ENCODE measurements at regions of chr11 and their contacts with region 1.

Region 1: GRCh38 chr11:12893787-12894672 is 115.1 kb upstream of the RASSF10 start:
- DNase-seq: no peak
- ATAC-seq: no peak

Region 2: DNA sequence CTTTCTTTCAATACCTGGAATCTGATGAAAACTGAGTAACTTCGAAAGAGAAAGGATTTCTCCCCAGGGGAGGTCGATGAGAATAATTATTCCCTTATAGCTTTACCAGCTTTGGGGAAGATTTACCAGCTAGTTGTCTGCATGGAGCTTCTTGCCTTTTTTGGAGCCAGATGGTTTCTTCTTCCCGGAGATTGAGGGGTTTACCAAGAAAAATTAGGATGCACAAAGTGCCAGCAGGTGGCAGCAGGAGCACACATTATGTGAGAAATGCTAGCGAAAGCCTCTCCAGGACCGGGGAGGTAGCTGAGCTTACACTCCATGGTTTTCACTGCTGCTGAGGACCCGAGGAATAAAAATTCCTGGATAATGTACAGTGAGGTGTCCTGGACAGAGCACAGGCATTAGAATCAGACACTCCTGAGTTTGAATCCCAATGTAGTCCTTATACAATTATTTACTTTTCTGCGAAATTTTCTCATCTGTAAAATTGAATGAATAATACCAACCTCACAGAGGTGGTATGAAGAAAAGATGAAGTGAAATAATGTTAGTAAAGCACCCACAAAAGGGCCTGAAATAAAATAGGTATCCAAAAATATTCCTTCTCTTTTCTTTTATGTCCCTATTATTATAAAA is 562.7 kb before region 1 on chr11:
- intact Hi-C with region 1: loop called (anchors 1 kb)
- DNase-seq: peak; percentile 82
- ATAC-seq: peak; percentile 84

Region 3: DNA sequence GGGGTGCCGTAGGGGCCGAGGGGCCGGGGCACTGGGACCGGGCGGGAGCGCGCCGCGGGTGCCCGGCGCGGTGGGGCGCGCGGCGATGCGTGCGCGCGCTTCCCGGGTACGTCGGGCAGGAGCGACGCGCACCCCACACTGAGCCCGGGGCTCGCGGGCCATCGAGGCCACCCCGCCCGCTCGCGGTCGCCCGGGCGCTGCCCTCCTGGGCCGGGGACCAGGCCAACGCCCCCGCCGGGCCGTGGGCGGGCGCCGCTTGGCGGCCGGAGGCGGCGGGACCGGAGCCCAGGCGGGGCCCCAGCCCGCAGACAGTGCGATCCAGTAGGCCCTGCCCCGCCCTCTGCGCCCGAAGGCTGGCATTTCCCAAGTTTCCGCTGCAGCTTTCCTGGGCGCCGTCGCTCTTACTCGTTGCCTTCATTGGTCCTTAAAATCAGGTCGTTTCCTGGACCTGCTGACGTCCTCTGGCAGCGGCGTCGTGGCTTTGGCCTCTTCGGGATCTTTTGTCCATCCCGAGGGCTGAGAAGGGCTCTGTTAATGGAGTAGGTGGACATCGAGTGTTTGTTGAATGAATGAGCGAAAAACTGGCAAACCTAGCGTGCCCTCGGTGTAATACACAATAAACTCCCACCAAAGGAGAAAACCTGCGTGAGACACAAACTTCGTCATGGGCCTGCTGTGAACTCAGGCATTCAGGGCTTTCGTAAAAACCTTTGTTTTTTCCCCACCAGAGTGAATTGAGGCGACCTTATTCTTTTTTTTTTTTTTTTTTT is 516.0 kb before region 1 on chr11:
- intact Hi-C with region 1: loop called (anchors 2 kb)
- DNase-seq: peak; percentile 85
- ATAC-seq: peak; percentile 58

Region 4: DNA sequence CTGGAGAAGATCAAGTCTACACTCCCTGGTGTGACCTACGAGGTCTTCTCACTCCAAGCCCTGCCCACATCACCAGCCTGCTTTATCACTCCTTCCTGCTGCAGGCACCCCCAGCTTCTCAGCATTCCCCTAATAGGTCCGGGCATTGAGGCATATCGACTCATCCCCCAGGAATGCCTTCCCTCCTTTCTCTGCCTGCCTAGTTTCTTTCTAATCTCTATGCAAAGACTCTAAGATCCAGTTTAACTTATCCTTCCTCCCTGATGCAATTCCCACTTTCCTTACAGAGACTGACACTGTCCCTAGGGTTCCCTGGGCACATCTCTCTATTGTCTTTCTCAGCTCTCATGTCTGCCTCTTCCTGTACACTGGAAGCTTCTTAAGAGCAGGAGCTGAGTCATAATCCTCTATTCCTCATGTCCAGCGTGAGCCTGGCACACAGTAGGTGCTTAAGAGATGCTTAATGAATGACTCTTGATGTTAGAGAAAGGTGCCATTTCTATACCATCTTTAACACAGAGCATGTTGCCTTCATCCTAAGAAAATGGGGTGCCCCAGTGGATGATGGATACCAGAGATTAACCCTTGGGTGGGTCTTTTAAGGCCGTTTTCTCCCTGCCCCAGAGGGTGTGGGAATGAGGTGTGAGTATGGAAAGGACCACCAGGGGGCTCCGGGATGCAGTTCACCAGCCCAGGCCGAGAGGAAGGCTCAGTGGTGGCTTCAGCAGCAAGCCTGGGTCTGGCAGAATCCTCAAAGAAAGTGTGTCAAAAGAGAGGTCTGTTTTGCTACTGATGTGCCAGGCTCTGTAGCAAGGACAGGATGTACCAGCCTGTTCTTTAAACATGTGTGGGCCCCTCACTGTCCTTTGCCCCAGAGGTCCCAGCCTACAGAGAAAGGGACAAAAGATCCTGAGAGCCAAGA is 482.0 kb before region 1 on chr11:
- intact Hi-C with region 1: loop called (anchors 5 kb)
- DNase-seq: no peak
- ATAC-seq: peak; percentile 86

Region 5: DNA sequence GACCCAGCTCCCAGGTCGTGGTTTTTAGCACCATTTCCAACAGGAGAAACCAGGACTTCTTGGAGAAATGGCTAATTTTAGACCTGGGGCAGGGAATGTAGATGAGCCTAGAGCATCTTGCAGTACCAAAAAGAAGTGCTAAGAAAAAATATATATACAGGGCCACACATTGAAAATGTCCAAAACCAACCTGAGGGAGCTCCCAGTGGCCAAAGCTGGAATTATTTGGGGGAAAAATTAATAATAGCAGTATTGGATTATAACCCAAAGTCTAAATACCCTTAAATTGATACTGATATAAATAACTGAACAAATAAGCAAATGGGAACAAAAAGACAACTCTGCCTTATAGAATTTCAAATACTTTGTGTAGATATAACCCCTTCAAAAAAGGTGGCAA is 408.7 kb before region 1 on chr11:
- intact Hi-C with region 1: loop called (anchors 10 kb)
- DNase-seq: no peak
- ATAC-seq: no peak

Region 6: DNA sequence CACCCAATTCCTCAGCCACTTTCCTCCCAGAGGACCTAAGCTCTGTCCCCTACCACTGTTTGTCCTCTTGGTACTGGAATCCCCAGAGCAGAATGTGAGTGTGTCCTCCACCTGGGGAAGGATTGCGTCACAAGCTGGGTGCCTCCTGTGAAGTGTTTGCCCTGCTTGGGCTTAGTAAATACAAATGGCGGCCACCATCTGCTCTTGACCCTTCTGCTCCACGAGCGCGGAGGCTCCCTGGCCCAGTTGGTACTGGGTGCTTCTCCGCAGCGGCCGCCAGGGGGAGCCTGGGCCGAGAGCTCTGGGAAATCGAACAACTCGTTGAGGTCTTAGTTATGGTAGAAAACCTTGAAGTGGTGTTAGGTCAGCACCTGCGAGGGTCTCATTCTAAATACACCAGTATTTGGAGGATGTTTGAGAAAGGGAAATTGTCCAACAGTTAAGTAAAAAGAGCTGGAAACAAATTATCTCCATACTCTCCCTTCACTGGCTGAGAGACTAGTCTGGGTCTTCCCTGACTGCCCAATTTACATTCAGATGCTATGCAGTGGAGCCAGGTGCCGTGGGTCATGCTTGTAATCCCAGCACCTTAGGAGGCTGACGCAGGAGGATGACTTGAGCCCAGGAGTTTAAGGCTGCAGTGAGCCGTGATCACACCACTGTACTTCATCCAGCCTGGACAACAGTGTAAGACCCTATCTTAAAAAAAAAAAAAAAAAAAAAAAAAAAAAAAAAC is 294.5 kb before region 1 on chr11:
- intact Hi-C with region 1: loop called (anchors 2 kb)
- DNase-seq: peak; percentile 81
- ATAC-seq: peak; percentile 46

Region 7: DNA sequence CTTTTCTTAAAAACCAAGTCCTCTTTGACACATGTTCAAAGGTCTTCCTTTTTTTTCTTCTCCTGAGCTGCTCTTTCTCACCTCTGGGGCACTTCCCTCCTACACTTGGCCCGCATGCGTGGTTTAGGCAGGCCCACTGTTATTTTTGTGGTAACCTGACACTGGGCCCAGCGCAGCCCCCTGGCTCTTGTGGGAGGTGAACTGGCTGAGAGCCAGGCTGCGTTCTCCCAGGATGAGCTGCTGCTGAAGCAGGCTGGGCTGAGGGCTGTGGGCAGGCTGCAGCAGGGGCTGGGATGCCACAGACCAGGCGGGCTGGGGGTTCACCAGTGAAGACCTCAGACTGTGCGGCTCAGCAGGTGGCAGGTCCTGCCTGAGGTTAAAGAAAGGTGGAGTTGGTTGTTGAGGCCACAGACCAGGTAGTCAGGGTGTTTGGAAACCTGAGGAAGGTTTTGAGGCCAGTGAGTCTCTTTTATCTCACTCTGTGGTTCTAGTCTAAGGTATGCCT is 147.4 kb before region 1 on chr11:
- intact Hi-C with region 1: loop called (anchors 10 kb)
- DNase-seq: peak; percentile 77
- ATAC-seq: peak; percentile 76

Region 8: DNA sequence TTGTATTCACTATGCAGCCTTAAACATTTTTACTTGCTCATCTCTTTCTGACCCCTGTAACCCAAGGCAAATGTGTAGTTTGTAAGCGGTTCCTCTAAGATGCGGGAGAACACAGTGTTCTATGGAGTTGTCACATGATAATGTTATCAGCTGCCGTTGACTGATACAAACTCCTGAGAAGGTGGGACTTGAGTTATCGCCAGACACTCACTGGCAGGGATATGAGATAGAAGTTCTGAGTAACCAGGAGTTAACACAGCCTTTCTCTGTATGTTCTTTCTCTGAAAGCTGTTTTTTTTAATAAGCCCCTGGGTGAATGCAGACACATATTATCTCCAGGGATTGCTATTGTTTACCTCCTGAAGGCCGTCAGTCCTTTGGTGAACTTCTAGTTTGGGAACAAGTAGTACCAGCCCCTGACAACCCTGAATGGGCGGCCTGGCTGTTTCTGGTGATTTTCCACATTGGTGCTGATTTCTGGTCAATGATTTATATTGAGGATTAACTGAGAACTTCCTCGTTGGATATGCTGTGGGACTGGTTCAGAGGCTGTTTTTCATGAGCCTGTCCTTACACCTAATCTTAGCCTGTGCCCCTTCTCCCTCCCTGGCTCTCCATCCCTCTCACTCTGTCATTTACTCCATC is 40.3 kb before region 1 on chr11:
- intact Hi-C with region 1: no loop called
- DNase-seq: no peak
- ATAC-seq: peak; percentile 70

Measured in Right ventricle myocardium inferior (tissue), 1 donor.